HepG2 (cell line): ENCODE measurements at regions of chr12 and their contacts with region 1.

Region 1: DNA sequence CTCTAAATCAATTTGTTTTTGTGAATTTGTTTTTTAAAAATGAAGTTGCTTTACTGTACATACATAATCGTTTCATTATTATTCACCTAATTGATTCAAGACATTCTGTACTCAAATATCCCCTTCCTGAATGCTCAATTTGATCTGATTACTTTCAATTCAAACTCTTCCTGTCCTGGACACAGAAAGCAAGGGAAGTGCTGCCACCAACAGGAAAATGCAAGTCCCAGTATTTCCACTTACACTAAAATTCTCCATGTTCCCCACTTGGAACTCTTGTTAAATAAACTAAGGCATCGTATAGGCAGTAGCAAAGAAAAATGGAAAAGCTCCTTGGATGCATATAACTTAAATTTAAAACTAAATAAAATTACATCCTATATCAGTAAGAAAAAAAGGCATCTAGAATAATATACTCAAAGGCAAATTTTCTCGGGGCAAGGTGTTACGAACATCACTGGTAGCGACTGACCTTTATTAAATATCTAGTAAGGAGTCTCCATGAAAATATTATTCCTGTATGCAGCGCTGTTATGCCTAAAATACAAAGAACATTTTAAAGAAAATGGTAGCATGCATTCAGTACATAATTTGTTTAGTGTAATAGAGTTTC is 72.0 kb upstream of the DBX2 start:
- DNase-seq: peak; percentile 17
- ATAC-seq: no peak
- H3K4me3 ChIP-seq: no peak overlapping the region
- H3K27ac ChIP-seq: no peak overlapping the region
- H3K4me1 ChIP-seq: no peaks in the 10 kb centered on the region
- H3K27me3 ChIP-seq: no peaks in the 10 kb centered on the region
- CTCF ChIP-seq: peak; percentile 53
- EP300 ChIP-seq: no peak
- POLR2A ChIP-seq: no peak
- RAD21 ChIP-seq: no peak

Region 2: GRCh38 chr12:44972746-44973421 is 150.0 kb before region 1 on chr12:
- CTCF ChIA-PET with region 1: no interaction called
- POLR2A ChIA-PET with region 1: no interaction called
- in situ Hi-C with region 1: no loop called
- intact Hi-C with region 1: loop called (anchors 2 kb)
- DNase-seq: peak; percentile 16
- ATAC-seq: peak; percentile 88
- H3K4me3 ChIP-seq: no peak overlapping the region
- H3K27ac ChIP-seq: no peak overlapping the region
- H3K4me1 ChIP-seq: no peaks in the 10 kb centered on the region
- H3K27me3 ChIP-seq: no peaks in the 10 kb centered on the region
- CTCF ChIP-seq: peak; percentile 64
- EP300 ChIP-seq: no peak
- POLR2A ChIP-seq: no peak
- RAD21 ChIP-seq: no peak

Region 3: GRCh38 chr12:45017916-45018315 is 105.0 kb before region 1 on chr12:
- CTCF ChIA-PET with region 1: no interaction called
- POLR2A ChIA-PET with region 1: no interaction called
- in situ Hi-C with region 1: no loop called
- intact Hi-C with region 1: no loop called
- DNase-seq: no peak
- ATAC-seq: no peak
- H3K4me3 ChIP-seq: no peak overlapping the region
- H3K27ac ChIP-seq: no peak overlapping the region
- H3K4me1 ChIP-seq: no peaks in the 10 kb centered on the region
- H3K27me3 ChIP-seq: no peaks in the 10 kb centered on the region; a peak in 1 of 5 replicates
- CTCF ChIP-seq: no peak
- EP300 ChIP-seq: no peak
- POLR2A ChIP-seq: no peak
- RAD21 ChIP-seq: no peak